ENCODE measurements at regions of chr5 and their contacts with region 1.

Region 1: GRCh38 chr5:172059661-172060100 is 53.2 kb upstream of the FBXW11 start:
- DNase-seq: no peak
- ATAC-seq: no peak
- H3K4me3 Mint-ChIP-seq: no peak overlapping the region
- H3K27ac Mint-ChIP-seq: no peak overlapping the region
- H3K4me1 Mint-ChIP-seq: peaks cover 4% of the 10 kb centered on the region
- H3K27me3 Mint-ChIP-seq: no peaks in the 10 kb centered on the region

Region 2: DNA sequence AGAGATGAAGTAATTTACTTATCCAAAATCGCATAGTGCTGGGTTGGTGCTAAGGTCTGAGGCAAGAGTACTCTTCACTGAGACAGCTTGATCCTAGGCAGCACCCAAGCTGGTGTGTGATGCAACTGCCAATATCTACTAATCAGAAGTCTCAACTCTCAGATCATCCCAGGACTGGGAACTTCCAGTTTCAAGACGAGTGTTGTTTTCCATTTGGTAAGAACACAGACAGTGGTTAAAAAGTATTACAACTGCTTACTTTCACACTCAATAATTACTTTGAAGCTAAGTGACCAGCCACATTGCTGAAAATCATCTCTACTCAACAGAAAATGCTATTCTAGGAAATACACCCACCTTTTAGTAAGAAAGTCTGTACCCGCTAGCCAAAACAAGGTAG is 98.6 kb before region 1 on chr5:
- CTCF ChIA-PET with region 1: no interaction called
- DNase-seq: peak; percentile 52
- ATAC-seq: peak; percentile 80
- H3K4me3 Mint-ChIP-seq: no peak overlapping the region
- H3K27ac Mint-ChIP-seq: peak overlapping the region; percentile 32
- H3K4me1 Mint-ChIP-seq: peaks cover 45% of the 10 kb centered on the region
- H3K27me3 Mint-ChIP-seq: no peaks in the 10 kb centered on the region

Region 3: DNA sequence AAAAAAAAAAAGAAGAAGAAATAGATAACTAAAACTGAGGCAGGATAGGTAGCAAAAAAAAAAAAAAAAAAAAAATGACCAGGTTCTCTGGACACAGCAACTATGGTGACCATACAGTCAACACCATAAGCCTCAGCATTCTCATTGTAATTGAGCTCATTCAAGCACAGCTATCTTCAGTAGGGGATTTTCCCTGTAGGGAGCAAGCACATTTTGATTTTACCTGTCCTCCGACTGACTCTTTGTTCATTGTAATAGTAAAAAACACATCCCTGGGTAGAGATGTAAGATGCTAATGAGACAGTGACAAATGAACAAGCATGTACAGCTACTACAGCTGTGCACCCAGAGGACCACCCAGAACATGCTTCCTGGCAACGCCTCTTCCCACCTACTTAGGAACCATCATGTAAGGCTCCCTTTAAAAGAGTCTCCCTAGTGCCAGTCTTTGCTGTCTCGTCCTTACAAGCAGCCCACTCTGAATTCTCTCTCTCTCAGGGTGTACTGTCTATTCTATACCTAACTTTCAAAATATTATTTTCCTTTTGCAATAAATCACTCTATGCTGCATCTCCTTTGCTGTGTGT is 11.7 kb after region 1 on chr5:
- CTCF ChIA-PET with region 1: interaction called, 10 read pairs
- DNase-seq: no peak
- ATAC-seq: no peak
- H3K4me3 Mint-ChIP-seq: no peak overlapping the region
- H3K27ac Mint-ChIP-seq: peak overlapping the region; percentile 50
- H3K4me1 Mint-ChIP-seq: peaks cover 49% of the 10 kb centered on the region
- H3K27me3 Mint-ChIP-seq: no peaks in the 10 kb centered on the region

Region 4: GRCh38 chr5:172162323-172162986 is 102.8 kb after region 1 on chr5:
- CTCF ChIA-PET with region 1: no interaction called
- DNase-seq: no peak
- ATAC-seq: no peak
- H3K4me3 Mint-ChIP-seq: no peak overlapping the region
- H3K27ac Mint-ChIP-seq: peak overlapping the region; percentile 41
- H3K4me1 Mint-ChIP-seq: peaks cover 48% of the 10 kb centered on the region
- H3K27me3 Mint-ChIP-seq: no peaks in the 10 kb centered on the region